MCF 10A (cell line): ENCODE measurements at regions of chr15 and their contacts with region 1.

Region 1: GRCh38 chr15:67120839-67121643 is 55.6 kb downstream of the SMAD3 start:
- DNase-seq: peak; percentile 77
- H3K4me3 Mint-ChIP-seq: peak overlapping the region; percentile 55
- H3K27ac Mint-ChIP-seq: peak overlapping the region; percentile 97
- H3K4me1 Mint-ChIP-seq: peaks cover 66% of the 10 kb centered on the region
- H3K27me3 Mint-ChIP-seq: no peaks in the 10 kb centered on the region
- CTCF ChIP-seq: no peak

Region 2: DNA sequence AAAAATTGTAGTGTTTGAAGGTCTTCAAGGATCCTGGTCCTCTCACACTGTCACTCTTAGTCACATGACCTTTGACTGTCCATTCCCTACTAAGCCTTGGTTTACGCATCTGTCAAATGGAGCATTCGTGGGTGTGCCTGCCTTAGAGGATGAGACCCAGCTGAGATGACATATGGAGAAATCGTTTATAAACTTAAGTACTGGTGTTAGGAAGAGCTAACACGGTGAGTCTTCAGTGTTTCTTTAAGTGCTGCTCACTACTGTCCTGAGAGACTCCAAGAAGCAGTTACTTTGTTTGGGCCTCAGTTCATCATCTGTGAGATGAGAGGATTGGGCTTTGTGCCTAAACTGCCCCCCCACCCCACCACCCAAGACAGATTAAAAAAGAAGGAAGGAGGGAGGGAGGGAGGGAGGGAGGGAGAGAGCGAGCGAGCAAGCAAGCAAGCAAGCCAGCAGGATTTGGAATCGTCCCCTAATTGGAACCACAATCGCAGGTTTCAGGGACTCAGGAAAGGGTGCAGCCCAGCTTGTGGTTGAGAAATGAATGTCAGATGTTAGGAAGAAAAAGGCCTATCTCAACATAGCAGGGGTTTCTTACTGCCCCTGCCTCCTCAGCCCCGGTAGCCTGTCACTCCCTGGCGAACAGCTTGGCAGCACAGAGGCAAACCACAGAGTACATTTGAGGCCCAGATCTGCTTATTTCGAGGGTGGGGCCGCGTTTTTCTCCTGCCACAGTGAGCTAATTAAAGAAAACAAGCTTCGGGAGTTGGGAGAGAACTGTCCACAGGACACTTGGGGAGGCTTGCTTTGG is 22.9 kb before region 1 on chr15:
- CTCF ChIA-PET with region 1: interaction called, 3 read pairs
- POLR2A ChIA-PET with region 1: interaction called, 12 read pairs
- intact Hi-C with region 1: no loop called
- DNase-seq: peak; percentile 78
- H3K4me3 Mint-ChIP-seq: peak overlapping the region; percentile 82
- H3K27ac Mint-ChIP-seq: peak overlapping the region; percentile 99
- H3K4me1 Mint-ChIP-seq: peaks cover 37% of the 10 kb centered on the region
- H3K27me3 Mint-ChIP-seq: no peaks in the 10 kb centered on the region
- CTCF ChIP-seq: no peak

Region 3: DNA sequence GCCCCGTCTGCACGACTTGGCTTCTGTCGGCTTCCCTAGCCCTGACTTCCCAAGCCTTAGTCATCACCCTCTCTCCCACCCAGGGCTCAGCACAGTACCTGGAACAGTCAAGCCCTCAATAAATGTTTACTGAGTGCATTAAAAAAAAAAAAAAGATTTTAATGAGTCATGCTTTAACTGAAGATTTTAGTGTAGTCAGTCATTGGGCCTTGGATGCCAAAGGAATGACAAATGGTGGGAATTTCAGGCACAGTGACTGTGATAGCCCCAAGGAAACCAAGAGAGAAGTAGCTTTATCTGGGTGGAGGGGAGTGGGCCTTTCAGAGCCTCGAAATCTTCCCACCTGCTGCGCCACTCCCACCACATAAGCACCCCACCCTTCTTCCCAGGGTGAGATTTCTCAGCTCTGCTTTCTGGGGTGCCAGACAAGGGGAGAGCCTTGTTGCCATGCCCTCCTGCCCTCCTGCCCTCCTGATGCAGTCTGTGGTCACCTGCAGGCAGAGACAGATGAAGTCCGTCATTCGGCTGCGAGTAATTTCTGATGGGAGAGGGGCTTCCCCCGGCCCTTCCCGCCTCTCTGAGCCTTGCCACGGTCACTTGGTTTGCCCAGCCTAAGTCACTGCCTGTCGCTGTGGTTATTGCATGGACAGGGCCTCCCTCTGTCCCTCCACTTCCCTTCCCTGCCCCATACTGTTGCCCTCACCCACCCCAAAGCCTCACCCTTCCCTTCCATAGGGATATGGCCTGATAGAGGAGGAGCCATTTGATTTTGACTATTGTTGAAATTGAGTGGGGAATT is 13.8 kb before region 1 on chr15:
- CTCF ChIA-PET with region 1: interaction called, 6 read pairs
- POLR2A ChIA-PET with region 1: interaction called, 63 read pairs
- intact Hi-C with region 1: loop called (anchors 2 kb)
- DNase-seq: peak; percentile 99
- H3K4me3 Mint-ChIP-seq: peak overlapping the region; percentile 52
- H3K27ac Mint-ChIP-seq: peak overlapping the region; percentile 98
- H3K4me1 Mint-ChIP-seq: peaks cover 40% of the 10 kb centered on the region
- H3K27me3 Mint-ChIP-seq: no peaks in the 10 kb centered on the region
- CTCF ChIP-seq: no peak

Region 4: GRCh38 chr15:67142767-67143100 is 21.7 kb after region 1 on chr15:
- CTCF ChIA-PET with region 1: no interaction called
- POLR2A ChIA-PET with region 1: interaction called, 39 read pairs
- intact Hi-C with region 1: no loop called
- DNase-seq: peak; percentile 67
- H3K4me3 Mint-ChIP-seq: no peak overlapping the region
- H3K27ac Mint-ChIP-seq: no peak overlapping the region
- H3K4me1 Mint-ChIP-seq: peaks cover 46% of the 10 kb centered on the region
- H3K27me3 Mint-ChIP-seq: no peaks in the 10 kb centered on the region
- CTCF ChIP-seq: no peak

Region 5: DNA sequence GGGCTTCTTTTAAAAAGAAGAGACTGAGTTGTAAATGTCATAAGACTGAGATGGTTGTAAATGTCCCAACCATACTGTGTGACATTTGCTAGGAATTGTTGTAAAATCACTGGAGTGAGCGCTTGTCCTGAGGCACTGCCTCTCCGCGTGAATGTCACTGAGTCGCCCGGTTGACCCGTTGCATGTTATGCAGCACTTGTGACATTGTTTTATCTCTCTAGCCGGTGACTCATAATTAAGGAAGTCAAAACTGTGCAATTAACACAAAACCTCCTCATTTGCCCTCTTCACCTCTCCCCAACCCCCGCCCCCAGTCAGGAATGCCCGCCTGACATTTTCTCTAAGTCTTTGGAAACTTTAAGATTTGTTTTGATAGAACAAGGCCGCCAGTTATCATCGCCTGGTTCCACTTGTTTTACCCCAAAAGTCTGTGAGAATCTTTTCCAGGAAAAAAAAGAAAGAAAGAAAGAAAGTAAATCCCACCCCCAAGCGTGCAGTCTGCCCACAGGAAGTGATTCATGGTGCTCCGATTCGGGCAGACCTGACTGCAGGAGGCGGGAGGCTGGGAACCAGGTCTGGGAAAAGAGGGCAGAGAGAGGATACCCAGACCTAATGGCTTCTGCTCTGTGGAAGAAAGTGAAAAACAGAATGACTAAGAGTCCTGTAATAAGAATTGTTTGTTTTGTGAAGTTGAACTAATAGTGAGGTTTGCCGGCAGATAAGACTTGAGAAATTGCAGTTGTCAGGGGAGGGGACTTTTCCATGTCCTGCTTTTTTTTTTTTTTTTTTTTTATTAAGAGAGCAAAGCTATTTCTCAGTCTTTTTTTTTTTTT is 29.2 kb after region 1 on chr15:
- CTCF ChIA-PET with region 1: no interaction called
- POLR2A ChIA-PET with region 1: interaction called, 39 read pairs
- intact Hi-C with region 1: no loop called
- DNase-seq: peak; percentile 97
- H3K4me3 Mint-ChIP-seq: peak overlapping the region; percentile 71
- H3K27ac Mint-ChIP-seq: peak overlapping the region; percentile 94
- H3K4me1 Mint-ChIP-seq: peaks cover 45% of the 10 kb centered on the region
- H3K27me3 Mint-ChIP-seq: no peaks in the 10 kb centered on the region
- CTCF ChIP-seq: no peak

Region 6: GRCh38 chr15:67175643-67176071 is 54.6 kb after region 1 on chr15:
- CTCF ChIA-PET with region 1: no interaction called
- POLR2A ChIA-PET with region 1: interaction called, 26 read pairs
- intact Hi-C with region 1: loop called (anchors 5 kb)
- DNase-seq: peak; percentile 93
- H3K4me3 Mint-ChIP-seq: peak overlapping the region; percentile 48
- H3K27ac Mint-ChIP-seq: peak overlapping the region; percentile 80
- H3K4me1 Mint-ChIP-seq: peaks cover 60% of the 10 kb centered on the region
- H3K27me3 Mint-ChIP-seq: no peaks in the 10 kb centered on the region
- CTCF ChIP-seq: no peak

Region 7: GRCh38 chr15:67366904-67367303 is 245.9 kb after region 1 on chr15:
- CTCF ChIA-PET with region 1: no interaction called
- POLR2A ChIA-PET with region 1: no interaction called
- intact Hi-C with region 1: no loop called
- DNase-seq: no peak
- H3K4me3 Mint-ChIP-seq: no peak overlapping the region
- H3K27ac Mint-ChIP-seq: no peak overlapping the region
- H3K4me1 Mint-ChIP-seq: no peaks in the 10 kb centered on the region
- H3K27me3 Mint-ChIP-seq: no peaks in the 10 kb centered on the region
- CTCF ChIP-seq: no peak